Activated CD4-positive, alpha-beta memory T cell treated with anti-CD3 and anti-CD28 coated beads, Interleukin-2, amount 10 ng/mL, durations not matched to agents 7 days and 5 days (primary cell): ENCODE measurements at regions of chr1 and their contacts with region 1.

Region 1: DNA sequence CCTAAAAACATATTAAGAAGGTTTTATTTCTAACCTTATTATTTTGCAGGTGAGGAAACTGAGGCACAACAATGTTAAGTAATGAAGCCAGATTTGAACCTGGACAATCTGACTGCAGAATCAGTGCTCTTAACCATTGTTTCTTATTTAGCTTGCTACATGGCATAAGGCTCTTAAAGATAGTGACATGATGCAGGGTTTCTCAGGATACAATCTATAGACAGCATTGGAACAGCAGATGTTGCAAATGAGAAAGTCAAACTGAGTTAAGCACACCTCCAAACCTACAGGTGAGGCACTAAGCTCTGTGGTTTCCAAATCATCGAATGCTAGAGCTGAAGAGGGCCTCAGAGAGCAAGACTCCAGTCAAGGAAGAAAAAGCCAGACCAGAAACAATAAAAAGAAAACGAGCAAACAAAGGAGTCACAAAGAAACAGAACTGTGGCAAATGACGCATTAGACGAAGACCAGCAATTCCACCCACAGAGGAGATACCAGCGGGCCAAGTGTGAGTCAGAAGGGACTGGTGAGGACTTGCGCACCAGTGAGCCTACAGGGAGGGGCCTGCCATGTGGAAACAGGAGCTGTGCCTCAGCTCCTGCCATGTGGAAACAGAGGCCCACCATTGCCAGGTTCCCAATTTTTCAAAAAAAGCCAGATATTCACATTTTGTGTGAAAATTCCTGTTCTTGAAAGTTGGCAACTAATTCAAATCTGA is 14.4 kb downstream of the CD58 start:
- DNase-seq: peak; percentile 84
- H3K4me3 Mint-ChIP-seq: peak overlapping the region; percentile 31
- H3K27ac Mint-ChIP-seq: peak overlapping the region; percentile 88
- H3K4me1 Mint-ChIP-seq: peaks cover 84% of the 10 kb centered on the region
- H3K27me3 Mint-ChIP-seq: no peaks in the 10 kb centered on the region

Region 2: DNA sequence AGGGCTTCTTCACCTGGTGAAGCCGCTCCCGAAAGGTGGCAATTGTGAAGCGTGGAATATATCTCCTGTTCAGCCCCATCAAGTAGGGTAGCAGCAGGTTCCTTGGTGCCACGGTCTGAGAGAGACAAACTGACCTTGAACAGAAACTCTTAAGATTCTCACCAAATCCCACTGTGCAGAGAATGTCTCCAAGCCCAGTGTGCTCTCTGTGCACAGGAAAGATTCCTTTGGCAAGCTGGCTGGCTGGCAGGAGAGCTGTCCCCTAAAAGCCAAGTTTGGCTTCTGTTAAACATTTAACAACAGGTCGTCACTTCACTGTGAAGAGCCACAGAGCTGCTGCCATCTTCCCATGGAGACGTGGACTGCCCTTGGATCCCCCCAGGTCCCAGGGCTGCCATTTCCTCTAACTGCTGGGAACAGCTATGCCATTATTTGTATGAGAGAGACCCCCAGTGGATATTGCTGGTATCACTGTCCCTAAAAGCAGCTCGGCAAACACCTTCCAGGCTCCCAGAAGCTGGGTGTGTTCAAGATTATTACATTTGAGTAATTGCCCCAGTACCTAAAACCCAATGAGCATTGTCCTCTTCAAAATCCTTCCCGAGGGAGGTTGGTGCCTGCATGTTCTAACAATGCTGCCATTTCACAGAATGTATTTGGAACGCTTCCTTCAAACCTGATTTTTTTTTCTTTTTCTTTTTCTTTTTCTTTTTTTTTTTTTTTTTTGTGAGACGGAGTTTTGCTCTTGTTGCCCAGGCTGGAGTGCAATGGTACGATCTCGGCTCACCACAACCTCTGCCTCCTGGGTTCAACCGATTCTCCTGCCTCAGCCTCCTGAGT is 57.4 kb before region 1 on chr1:
- CTCF ChIA-PET with region 1: interaction called, 10 read pairs
- POLR2A ChIA-PET with region 1: interaction called, 15 read pairs
- DNase-seq: peak; percentile 54
- H3K4me3 Mint-ChIP-seq: no peak overlapping the region
- H3K27ac Mint-ChIP-seq: peak overlapping the region; percentile 53
- H3K4me1 Mint-ChIP-seq: peaks cover 64% of the 10 kb centered on the region
- H3K27me3 Mint-ChIP-seq: no peaks in the 10 kb centered on the region

Region 3: GRCh38 chr1:116504308-116505156 is 51.9 kb before region 1 on chr1:
- CTCF ChIA-PET with region 1: interaction called, 10 read pairs
- POLR2A ChIA-PET with region 1: interaction called, 15 read pairs
- DNase-seq: peak; percentile 93
- H3K4me3 Mint-ChIP-seq: peak overlapping the region; percentile 1
- H3K27ac Mint-ChIP-seq: peak overlapping the region; percentile 89
- H3K4me1 Mint-ChIP-seq: peaks cover 90% of the 10 kb centered on the region
- H3K27me3 Mint-ChIP-seq: no peaks in the 10 kb centered on the region

Region 4: GRCh38 chr1:116544588-116545358 is 11.7 kb before region 1 on chr1:
- CTCF ChIA-PET with region 1: no interaction called
- POLR2A ChIA-PET with region 1: interaction called, 15 read pairs
- DNase-seq: no peak
- H3K4me3 Mint-ChIP-seq: peak overlapping the region; percentile 54
- H3K27ac Mint-ChIP-seq: peak overlapping the region; percentile 89
- H3K4me1 Mint-ChIP-seq: peaks cover 80% of the 10 kb centered on the region
- H3K27me3 Mint-ChIP-seq: no peaks in the 10 kb centered on the region

Region 5: DNA sequence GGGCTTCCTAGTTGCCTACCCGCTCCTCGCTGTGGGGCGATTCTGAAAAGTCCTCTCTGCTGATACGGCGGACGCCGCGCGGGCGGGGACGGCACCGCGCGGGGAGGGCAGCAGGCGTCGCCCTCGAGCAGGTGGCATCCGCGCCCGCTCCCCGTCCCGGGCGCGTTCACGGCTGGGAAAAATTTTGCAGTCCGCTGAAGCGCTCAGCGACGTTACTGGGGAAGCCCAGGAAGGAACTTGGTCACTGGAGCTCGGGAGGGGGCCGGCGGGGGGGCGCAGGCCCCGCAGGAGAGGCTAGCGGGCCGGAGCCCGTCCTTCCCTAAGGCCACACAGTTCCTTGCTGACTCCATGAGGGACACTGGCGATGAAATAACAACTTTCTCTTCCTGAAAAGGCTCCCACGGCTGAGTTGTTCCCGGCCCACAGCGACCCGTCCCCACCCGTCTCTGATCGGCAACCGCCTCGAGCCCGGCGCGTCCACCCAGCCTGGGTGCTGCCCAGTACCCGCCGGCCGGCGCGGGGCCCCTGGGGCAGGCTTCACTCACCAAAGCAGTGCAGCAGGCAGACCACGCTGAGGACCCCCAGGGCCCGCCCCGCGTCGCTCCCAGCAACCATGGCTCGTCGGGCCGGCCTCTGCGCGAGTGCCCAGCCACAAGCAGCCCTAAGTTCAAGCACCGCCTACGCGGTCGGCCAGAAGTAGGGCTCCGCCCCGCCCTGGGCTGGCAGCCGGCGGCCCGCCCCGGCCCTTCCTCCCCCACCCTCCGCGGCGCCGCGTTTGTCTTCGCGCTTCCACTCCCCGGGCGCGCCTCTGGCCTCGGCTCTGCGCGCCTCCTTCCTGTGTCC is 14.1 kb after region 1 on chr1 and contains the start of gene CD58:
- CTCF ChIA-PET with region 1: interaction called, 12 read pairs
- POLR2A ChIA-PET with region 1: interaction called, 48 read pairs
- DNase-seq: peak; percentile 89
- H3K4me3 Mint-ChIP-seq: peak within 1 kb of the TSS; percentile 89
- H3K27ac Mint-ChIP-seq: peak within 1 kb of the TSS; percentile 85
- H3K4me1 Mint-ChIP-seq: peaks cover 66% of the 10 kb centered on the region
- H3K27me3 Mint-ChIP-seq: no peaks in the 10 kb centered on the region
- total RNA-seq, gene CD58: 55.2 to 59.7 TPM